ENCODE measurements at regions of chr1 and their contacts with region 1.

Region 1: GRCh38 chr1:8097077-8097799 is 71.1 kb upstream of the ERRFI1 start:
- DNase-seq: peak; percentile 95
- H3K4me3 ChIP-seq: peak overlapping the region in 1 of 3 experiments; percentile 4
- H3K27ac ChIP-seq: peak overlapping the region; percentile 95
- H3K4me1 ChIP-seq: peaks cover 40% of the 10 kb centered on the region
- H3K27me3 ChIP-seq: no peaks in the 10 kb centered on the region
- CTCF ChIP-seq: no peak

Region 2: GRCh38 chr1:8026153-8026975 is 70.9 kb before region 1 on chr1 and contains the start of gene ERRFI1:
- CTCF ChIA-PET with region 1: no interaction called
- dilution Hi-C with region 1: no loop called
- in situ Hi-C with region 1: no loop called
- intact Hi-C with region 1: loop called (anchors 2 kb)
- DNase-seq: peak; percentile 93
- H3K4me3 ChIP-seq: peak within 1 kb of the TSS; percentile 69 to 96 (median 90)
- H3K27ac ChIP-seq: peak within 1 kb of the TSS; percentile 93
- H3K4me1 ChIP-seq: peaks cover 46% of the 10 kb centered on the region
- H3K27me3 ChIP-seq: no peaks in the 10 kb centered on the region
- CTCF ChIP-seq: no peak
- total RNA-seq, gene ERRFI1: 38.8 to 150 TPM

Region 3: GRCh38 chr1:8047681-8048445 is 49.4 kb before region 1 on chr1:
- CTCF ChIA-PET with region 1: no interaction called
- dilution Hi-C with region 1: no loop called
- in situ Hi-C with region 1: no loop called
- intact Hi-C with region 1: loop called (anchors 1 kb)
- DNase-seq: peak; percentile 93
- H3K4me3 ChIP-seq: no peak overlapping the region
- H3K27ac ChIP-seq: peak overlapping the region; percentile 89
- H3K4me1 ChIP-seq: peaks cover 27% of the 10 kb centered on the region
- H3K27me3 ChIP-seq: no peaks in the 10 kb centered on the region
- CTCF ChIP-seq: no peak

Region 4: DNA sequence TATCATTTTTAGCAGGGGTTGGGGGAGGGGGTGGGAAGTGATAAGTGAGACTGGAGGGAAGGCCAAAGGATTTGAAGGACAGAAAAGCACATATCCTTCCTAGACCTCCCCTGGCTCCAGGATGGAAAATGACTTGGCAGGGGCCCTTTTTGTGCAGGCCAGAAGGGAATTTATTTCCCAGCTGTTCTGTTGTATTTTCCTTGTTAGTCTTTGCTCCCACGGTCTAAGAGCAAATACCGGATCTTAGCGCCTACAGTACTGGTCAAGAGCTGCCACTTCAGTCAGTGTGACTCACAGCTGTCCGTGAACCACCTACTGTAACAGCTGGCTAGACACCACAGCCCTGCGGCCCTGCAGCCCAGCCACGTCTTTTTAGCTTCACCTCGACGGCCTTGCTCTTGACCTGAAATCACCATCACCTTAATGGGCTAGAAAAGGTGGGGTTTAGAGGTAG is 20.1 kb before region 1 on chr1:
- CTCF ChIA-PET with region 1: interaction called, 3 read pairs
- dilution Hi-C with region 1: no loop called
- in situ Hi-C with region 1: no loop called
- intact Hi-C with region 1: loop called (anchors 2 kb)
- DNase-seq: peak; percentile 89
- H3K4me3 ChIP-seq: no peak overlapping the region
- H3K27ac ChIP-seq: peak overlapping the region; percentile 95
- H3K4me1 ChIP-seq: peaks cover 38% of the 10 kb centered on the region
- H3K27me3 ChIP-seq: no peaks in the 10 kb centered on the region
- CTCF ChIP-seq: no peak

Region 5: GRCh38 chr1:8133657-8134430 is 36.6 kb after region 1 on chr1:
- CTCF ChIA-PET with region 1: no interaction called
- dilution Hi-C with region 1: no loop called
- in situ Hi-C with region 1: no loop called
- intact Hi-C with region 1: loop called (anchors 2 kb)
- DNase-seq: peak; percentile 92
- H3K4me3 ChIP-seq: no peak overlapping the region
- H3K27ac ChIP-seq: peak overlapping the region; percentile 72
- H3K4me1 ChIP-seq: peaks cover 47% of the 10 kb centered on the region
- H3K27me3 ChIP-seq: no peaks in the 10 kb centered on the region
- CTCF ChIP-seq: no peak

Region 6: GRCh38 chr1:8204823-8205222 is 107.6 kb after region 1 on chr1:
- CTCF ChIA-PET with region 1: no interaction called
- dilution Hi-C with region 1: loop called (anchors 5 kb)
- in situ Hi-C with region 1: no loop called
- intact Hi-C with region 1: no loop called
- DNase-seq: no peak
- H3K4me3 ChIP-seq: no peak overlapping the region
- H3K27ac ChIP-seq: peak overlapping the region; percentile 77
- H3K4me1 ChIP-seq: peaks cover 41% of the 10 kb centered on the region
- H3K27me3 ChIP-seq: no peaks in the 10 kb centered on the region
- CTCF ChIP-seq: no peak

Region 7: GRCh38 chr1:8238851-8239305 is 141.6 kb after region 1 on chr1:
- CTCF ChIA-PET with region 1: interaction called, 3 read pairs
- dilution Hi-C with region 1: no loop called
- in situ Hi-C with region 1: no loop called
- intact Hi-C with region 1: loop called (anchors 1 kb)
- DNase-seq: peak; percentile 58
- H3K4me3 ChIP-seq: no peak overlapping the region
- H3K27ac ChIP-seq: no peak overlapping the region
- H3K4me1 ChIP-seq: peaks cover 15% of the 10 kb centered on the region
- H3K27me3 ChIP-seq: no peaks in the 10 kb centered on the region
- CTCF ChIP-seq: peak; percentile 26 to 61

Measured in mammary epithelial cell (primary cell).